ENCODE measurements at regions of chr7 and their contacts with region 1.

Region 1: DNA sequence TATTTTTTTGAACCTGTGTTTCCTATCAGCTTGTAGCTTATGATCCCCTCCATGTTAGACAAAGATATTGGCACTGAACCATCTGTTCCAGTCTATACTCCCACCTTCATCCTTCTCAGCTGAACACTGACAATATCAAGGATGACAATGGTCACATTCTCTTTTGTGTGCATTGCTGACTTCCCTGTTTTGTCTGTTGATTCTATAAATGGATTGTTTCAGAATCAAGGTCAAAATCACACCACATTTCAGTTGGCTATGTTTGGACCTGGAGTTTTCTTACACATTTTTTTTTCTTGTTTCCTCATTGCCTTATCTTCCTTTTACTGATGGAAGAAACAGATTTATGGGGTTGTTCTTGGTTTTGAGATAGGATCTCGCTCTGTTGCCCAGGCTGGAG is 11.3 kb upstream of the SMURF1 start:
- DNase-seq: no peak
- ATAC-seq: no peak

Region 2: DNA sequence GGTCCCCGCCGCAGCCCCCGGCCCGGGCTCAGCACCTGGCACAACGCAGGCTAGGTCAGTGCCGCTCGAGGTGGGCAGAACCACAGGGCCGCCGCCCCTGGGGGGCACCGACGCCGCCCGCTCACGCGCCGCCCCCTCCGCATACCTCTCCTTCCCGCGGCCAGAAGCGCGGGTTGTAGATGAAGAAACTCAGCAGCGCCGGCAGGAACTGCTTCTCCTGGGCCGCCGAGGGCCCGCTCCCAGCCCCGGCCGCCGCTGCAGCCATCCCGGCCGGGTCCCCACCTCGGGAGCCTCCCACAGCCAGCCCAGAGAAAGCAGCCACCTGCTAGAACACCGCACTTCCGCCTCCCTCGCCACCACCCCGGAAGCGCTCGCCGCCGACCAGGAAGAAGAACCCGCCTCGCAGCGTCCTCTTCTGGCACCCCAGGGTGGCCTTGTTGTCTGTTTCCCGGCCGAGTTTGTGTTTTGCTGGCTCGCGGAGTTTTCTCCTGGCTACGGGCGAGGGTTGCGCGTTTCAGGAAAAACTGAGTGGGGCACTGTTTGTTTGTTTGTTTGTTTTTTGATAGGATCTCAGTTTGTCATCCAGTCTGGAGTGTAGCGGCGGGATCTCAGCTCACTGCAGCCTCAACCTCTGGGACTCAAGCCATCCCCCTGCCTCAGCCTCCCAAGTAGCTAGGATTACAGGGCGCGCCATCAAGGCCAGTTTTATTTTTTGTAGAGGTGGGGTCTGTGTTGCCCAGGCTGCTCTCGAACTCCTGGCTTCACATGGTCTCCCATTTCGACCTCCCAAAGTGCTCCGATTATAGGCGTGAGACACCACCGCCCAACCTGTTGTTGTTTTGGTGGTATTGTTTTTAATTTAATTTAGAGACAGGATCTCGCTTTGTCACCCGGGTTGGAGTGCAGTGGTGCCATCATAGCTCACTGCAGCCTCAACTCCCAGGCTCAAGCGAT is 1182.9 kb before region 1 on chr7:
- intact Hi-C with region 1: no loop called
- DNase-seq: peak; percentile 84
- ATAC-seq: peak; percentile 91

Region 3: GRCh38 chr7:98394377-98394836 is 760.8 kb before region 1 on chr7:
- intact Hi-C with region 1: no loop called
- DNase-seq: no peak
- ATAC-seq: no peak

Region 4: DNA sequence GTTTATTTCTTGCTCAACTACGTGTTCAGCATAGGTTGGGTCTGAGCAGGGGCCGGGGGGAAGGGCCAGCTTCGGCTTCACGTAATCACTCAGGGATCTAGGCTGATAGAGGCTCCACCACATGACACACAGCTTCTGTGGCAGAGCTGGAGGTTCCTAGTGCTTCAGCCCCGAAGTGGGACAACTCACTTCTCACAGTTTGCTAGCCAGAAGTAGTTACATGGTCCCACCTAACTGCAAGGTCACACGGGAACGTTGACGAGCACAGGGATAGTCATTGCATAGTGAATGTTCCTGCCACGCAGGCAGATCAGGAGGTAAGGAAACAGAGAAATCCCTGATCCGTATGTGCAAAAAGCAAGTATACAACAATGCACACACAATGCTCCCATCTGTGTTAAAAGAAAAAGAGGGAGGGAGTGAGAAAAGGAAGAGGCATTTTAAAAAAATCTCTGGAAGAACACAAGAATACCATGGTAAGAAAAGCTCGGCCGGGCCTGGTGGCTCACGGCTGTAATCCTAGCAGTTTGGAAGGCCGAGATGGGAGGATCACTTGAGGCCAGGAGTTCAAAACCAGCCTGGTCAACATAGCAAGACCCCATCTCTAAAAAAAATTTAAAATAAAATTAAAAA is 28.2 kb before region 1 on chr7:
- intact Hi-C with region 1: loop called (anchors 1 kb)
- DNase-seq: no peak
- ATAC-seq: peak; percentile 44

Region 5: GRCh38 chr7:99193527-99194220 is 38.5 kb after region 1 on chr7:
- intact Hi-C with region 1: no loop called
- DNase-seq: no peak
- ATAC-seq: no peak

Region 6: DNA sequence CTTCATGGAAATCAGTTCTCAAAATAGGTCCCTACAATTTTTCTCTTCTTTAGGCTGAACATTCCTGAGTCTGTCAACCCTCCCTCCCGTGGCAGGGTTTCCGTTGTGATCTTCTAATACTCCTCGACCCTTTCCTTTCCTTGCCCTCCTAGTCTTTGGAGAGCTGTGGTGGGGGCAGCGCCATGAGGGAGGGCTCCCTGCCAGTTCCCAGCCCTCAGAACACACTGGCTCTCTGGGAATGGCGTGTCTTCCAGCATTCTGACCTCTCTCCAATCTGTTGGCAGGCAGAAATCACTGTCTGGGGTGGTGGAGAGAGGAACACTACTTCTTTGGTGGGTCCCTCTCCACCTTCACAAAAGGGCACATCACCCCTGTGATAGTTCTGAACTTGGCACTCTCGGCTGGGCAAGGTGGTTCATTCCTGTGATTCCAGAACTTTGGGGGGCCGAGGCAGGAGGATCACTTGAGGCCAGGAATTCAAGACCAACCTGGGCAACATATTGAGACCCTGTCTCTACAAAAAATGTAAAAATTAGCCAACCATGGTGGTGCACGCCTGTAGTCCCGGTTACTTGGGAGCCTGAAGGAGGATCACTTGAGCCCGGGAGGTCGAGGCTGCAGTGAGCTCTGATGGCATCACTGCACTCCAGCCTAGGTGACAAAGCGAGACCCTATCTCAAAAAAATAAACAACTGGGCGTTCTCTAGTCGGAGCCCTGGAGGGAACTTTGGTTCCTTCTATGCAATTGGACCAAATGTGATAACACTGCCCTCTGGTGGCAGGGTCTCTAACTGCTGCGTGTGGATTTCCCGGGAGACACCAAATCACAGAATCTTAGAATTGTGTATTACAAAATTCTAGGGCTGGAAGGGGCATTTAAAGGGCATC is 157.3 kb after region 1 on chr7:
- intact Hi-C with region 1: loop called (anchors 10 kb)
- DNase-seq: peak; percentile 85
- ATAC-seq: peak; percentile 80

Region 7: GRCh38 chr7:99514050-99514449 is 358.8 kb after region 1 on chr7:
- intact Hi-C with region 1: no loop called
- DNase-seq: no peak
- ATAC-seq: no peak

Measured in sciatic nerve (tissue), 2 donors.